SK-N-SH (cell line): ENCODE measurements at regions of chr9 and their contacts with region 1.

Region 1: DNA sequence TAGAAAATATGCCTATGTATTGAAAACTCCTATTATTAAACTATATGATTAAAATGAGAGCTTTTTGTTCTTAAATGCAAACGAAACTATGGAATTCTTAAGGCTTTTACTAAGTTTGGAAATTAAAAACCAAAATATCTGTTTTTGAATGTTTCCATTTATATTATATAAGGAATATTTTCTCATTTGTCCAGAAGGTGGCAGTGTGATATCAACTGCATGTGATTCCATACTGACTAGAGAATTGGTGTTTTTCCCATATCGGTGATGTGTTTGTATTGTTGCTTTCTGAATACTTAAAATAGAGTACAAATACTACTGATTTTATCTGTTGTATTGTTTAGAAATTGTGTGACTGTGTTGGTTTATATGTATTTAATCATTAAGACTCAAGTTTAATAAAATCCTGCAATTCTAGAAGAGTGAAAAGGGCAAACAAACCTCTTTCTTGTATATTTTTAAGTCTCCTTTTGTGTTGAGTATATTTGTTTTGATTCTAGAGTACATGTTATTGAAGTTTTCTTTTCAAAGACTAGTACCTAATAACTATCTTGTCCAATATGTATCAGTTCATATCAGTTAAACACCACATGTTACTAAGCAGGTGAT is 320.8 kb downstream of the CCDC171 start:
- DNase-seq: peak; percentile 35
- H3K4me3 ChIP-seq: no peak overlapping the region
- H3K27ac ChIP-seq: peak overlapping the region; percentile 11 to 25; a peak in 1 of 4 replicates
- H3K4me1 ChIP-seq: peaks cover 5 to 8% of the 10 kb centered on the region in 2 experiments; a peak in 2 of 4 replicates
- H3K27me3 ChIP-seq: no peaks in the 10 kb centered on the region
- CTCF ChIP-seq: peak; percentile 83
- EP300 ChIP-seq: no peak
- RAD21 ChIP-seq: peak; percentile 88

Region 2: GRCh38 chr9:15927161-15927560 is 53.5 kb after region 1 on chr9:
- CTCF ChIA-PET with region 1: no interaction called
- POLR2A ChIA-PET with region 1: no interaction called
- DNase-seq: no peak
- H3K4me3 ChIP-seq: no peak overlapping the region
- H3K27ac ChIP-seq: peak overlapping the region; percentile 28 to 34; a peak in 2 of 4 replicates
- H3K4me1 ChIP-seq: peaks cover 0 to 4% of the 10 kb centered on the region in 2 experiments; a peak in 1 of 4 replicates
- H3K27me3 ChIP-seq: no peaks in the 10 kb centered on the region
- CTCF ChIP-seq: no peak
- EP300 ChIP-seq: peak in 1 of 2 experiments; percentile 50; a peak in 1 of 4 replicates
- RAD21 ChIP-seq: no peak

Region 3: GRCh38 chr9:15977438-15977837 is 103.8 kb after region 1 on chr9:
- CTCF ChIA-PET with region 1: no interaction called
- POLR2A ChIA-PET with region 1: no interaction called
- DNase-seq: no peak
- H3K4me3 ChIP-seq: no peak overlapping the region
- H3K27ac ChIP-seq: no peak overlapping the region
- H3K4me1 ChIP-seq: no peaks in the 10 kb centered on the region
- H3K27me3 ChIP-seq: no peaks in the 10 kb centered on the region
- CTCF ChIP-seq: no peak
- EP300 ChIP-seq: no peak
- RAD21 ChIP-seq: no peak

Region 4: DNA sequence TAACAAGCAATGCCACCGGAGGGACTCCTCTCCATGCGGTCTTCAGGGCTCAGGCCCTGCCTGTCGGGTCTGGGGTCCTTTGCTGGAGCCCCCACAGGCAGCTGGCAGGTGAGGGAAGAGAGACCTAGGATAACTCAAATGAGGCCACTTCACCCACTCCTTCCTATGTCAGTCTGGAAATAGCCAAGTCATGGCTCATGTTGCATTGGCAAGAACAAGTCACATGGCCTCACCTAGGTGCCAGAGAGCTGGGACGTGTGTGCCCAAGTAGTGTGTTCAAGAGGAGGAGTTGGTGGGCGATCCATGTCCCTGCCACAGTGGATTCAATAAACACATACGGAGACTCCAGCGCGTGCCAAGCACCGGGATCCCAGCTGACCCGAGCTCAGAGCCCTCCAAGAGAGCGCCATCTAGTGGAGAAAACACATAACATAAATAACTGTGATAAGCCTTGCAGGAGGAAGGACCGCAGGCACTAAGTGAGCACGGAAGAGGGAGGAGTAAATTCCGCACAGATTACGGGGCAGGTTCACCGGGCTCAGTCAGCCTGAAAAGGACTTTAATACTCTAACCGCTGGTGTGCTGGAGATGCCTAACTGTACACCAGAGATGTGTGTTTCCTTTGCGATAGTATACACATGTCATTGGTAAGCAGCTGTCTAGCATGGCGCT is 260.0 kb after region 1 on chr9:
- CTCF ChIA-PET with region 1: interaction called, 10 read pairs
- POLR2A ChIA-PET with region 1: no interaction called
- DNase-seq: peak; percentile 51
- H3K4me3 ChIP-seq: peak overlapping the region in 1 of 2 experiments; percentile 39; a peak in 1 of 4 replicates
- H3K27ac ChIP-seq: no peak overlapping the region
- H3K4me1 ChIP-seq: peaks cover 0 to 12% of the 10 kb centered on the region in 2 experiments; a peak in 1 of 4 replicates
- H3K27me3 ChIP-seq: no peaks in the 10 kb centered on the region
- CTCF ChIP-seq: peak; percentile 69
- EP300 ChIP-seq: no peak
- RAD21 ChIP-seq: peak; percentile 56